Right lobe of liver (tissue), 6 donors: ENCODE measurements at regions of chr2 and their contacts with region 1.

Region 1: GRCh38 chr2:168758970-168759820 is 43.2 kb upstream of the NOSTRIN start:
- DNase-seq: no peak
- ATAC-seq: peak; percentile 91 to 92 (median 91)
- H3K4me3 ChIP-seq: no peak overlapping the region
- H3K27ac ChIP-seq: no peak overlapping the region
- H3K4me1 ChIP-seq: no peaks in the 10 kb centered on the region
- H3K27me3 ChIP-seq: no peaks in the 10 kb centered on the region
- CTCF ChIP-seq: peak; percentile 62 to 78 (median 68)
- POLR2A ChIP-seq: no peak

Region 2: DNA sequence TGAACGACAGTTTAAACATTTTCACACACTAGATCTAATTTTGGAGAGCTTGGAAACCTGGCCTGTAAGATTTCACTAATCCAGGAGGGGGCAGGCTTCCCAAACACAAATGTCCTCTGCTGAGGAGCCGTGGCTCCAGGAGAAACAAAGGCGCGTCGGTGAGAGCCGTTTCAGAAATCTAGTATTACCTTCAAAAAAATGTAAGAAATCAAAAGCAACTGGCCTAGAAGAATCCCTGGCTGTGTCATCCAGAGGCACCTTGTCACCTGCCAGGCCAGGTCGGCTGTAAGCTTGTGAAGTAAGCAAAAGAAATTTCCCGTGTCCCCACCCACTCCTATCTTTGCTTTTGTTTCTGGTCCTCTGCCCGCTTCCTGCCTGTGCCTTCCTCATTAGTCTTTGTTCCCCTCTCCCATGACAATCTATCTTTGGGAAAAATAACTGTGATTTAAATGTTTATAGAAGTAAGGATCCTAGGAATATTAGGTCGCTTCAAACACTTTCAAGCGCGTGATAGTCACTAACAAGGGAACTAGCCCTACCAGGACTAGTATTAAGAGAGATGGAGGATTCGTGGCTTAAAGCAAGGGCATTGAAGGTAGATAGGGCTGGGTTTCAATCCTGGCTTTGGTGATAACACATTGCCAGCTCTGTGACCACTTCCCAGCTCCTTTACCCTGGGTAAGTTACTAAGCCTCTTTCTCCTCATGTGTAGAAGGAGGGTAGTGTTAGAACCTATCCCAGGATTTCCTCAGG is 412.3 kb before region 1 on chr2:
- intact Hi-C with region 1: loop called (anchors 5 to 10 kb)
- DNase-seq: peak in 2 of 3 donors; percentile 44 to 71
- ATAC-seq: peak; percentile 92 to 95 (median 94)
- H3K4me3 ChIP-seq: peak overlapping the region; percentile 35 to 56 (median 48)
- H3K27ac ChIP-seq: no peak overlapping the region
- H3K4me1 ChIP-seq: peaks cover 0 to 7% (median 0%) of the 10 kb centered on the region in 4 donors
- H3K27me3 ChIP-seq: no peaks in the 10 kb centered on the region
- CTCF ChIP-seq: peak; percentile 76 to 91 (median 84)
- POLR2A ChIP-seq: no peak

Region 3: DNA sequence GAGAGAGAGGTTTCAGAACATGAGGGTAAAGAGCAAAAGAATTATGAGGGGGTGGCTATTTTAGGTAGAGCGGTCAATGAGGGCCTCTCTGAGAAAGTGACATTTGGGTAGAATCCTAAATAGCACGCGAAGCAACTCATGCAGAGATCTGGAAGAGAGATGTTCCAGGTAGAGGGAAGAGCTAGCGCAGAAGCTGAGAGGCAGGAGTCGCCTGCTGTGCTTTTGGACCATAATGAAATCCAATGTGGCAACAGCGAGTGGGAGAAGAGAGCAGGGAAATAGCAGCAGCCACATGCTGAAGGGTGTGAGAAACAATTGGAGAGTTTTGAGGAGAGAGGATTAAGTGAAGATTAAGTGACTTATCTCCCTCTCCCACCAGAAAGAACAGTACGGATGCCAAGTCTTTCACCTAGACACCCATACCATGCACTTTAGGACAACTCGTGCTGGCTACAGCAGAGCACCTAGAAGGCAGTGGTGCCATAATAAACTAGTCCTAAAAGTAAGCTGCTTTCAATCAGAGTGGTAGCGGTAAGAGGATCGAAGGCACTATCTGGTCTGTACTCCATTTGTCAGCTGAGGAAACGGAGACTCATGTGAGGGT is 473.5 kb after region 1 on chr2:
- intact Hi-C with region 1: no loop called
- DNase-seq: no peak
- ATAC-seq: no peak
- H3K4me3 ChIP-seq: no peak overlapping the region
- H3K27ac ChIP-seq: no peak overlapping the region
- H3K4me1 ChIP-seq: no peaks in the 10 kb centered on the region
- H3K27me3 ChIP-seq: no peaks in the 10 kb centered on the region
- CTCF ChIP-seq: no peak
- POLR2A ChIP-seq: no peak